ENCODE measurements at regions of chr17 and their contacts with region 1.

Region 1: DNA sequence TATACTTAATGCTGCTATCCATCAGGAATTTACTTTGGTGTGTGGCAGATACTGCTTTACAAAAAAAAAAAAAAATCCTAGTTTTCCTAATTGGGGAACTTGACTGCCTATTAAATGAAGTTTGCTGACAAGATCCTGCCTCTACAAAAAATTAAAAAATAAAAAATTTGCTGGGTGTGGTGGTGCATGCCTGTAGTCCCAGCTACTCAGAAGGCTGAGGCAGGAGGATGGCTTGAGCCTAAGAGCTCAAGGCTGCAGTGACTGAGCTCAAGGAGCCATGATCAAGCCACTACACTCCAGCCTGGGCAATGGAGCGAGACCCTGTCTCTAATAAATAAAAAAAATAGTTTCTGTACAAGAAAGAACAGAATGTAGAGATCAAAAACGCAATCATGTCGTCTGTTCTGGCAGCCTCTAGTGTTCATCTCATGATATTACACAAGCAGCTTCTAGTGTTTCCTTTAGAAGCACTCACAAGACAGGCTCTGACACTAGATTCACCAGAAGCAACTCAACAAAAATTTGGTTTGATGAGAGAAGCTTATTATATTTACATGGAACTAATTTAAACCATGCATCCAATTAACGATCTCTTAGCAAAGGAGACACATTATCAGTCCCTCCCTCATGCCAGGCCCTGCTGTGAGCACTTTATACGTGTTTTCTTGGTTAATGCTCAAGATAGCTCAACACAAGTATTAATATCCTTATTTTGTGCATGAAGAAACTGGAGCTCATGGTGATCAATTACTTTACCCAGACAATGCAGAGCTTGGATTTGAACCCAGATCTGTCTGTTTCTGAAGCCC is 6.8 kb upstream of the KRTAP17-1 start:
- DNase-seq: no peak
- ATAC-seq: peak; percentile 74
- H3K4me3 Mint-ChIP-seq: no peak overlapping the region
- H3K27ac Mint-ChIP-seq: no peak overlapping the region
- H3K4me1 Mint-ChIP-seq: peaks cover 15% of the 10 kb centered on the region
- H3K27me3 Mint-ChIP-seq: no peaks in the 10 kb centered on the region
- CTCF ChIP-seq: peak; percentile 82

Region 2: DNA sequence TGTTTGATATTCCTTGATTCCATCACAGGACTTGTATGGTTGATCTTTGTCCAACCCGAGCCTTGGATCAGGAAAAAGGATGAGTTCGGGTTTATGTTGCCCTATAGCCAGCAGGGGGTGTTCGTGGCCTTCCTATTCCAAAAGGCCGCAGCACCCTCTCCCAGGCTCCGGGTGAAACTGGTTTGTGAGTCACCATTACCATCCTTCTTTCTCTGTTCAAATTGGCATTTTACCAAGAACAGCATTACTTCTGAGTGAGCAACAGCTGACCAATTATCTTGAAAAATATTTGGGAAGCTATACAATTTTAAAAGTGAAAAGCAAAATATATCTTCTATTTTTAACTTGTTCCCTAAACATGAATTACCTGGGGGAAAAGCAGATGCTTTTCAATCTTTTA is 412.9 kb before region 1 on chr17:
- CTCF ChIA-PET with region 1: interaction called, 9 read pairs
- POLR2A ChIA-PET with region 1: no interaction called
- intact Hi-C with region 1: loop called (anchors 2 kb)
- DNase-seq: peak; percentile 82
- ATAC-seq: peak; percentile 94
- H3K4me3 Mint-ChIP-seq: no peak overlapping the region
- H3K27ac Mint-ChIP-seq: no peak overlapping the region
- H3K4me1 Mint-ChIP-seq: no peaks in the 10 kb centered on the region
- H3K27me3 Mint-ChIP-seq: peaks cover 23% of the 10 kb centered on the region
- CTCF ChIP-seq: peak; percentile 80

Region 3: DNA sequence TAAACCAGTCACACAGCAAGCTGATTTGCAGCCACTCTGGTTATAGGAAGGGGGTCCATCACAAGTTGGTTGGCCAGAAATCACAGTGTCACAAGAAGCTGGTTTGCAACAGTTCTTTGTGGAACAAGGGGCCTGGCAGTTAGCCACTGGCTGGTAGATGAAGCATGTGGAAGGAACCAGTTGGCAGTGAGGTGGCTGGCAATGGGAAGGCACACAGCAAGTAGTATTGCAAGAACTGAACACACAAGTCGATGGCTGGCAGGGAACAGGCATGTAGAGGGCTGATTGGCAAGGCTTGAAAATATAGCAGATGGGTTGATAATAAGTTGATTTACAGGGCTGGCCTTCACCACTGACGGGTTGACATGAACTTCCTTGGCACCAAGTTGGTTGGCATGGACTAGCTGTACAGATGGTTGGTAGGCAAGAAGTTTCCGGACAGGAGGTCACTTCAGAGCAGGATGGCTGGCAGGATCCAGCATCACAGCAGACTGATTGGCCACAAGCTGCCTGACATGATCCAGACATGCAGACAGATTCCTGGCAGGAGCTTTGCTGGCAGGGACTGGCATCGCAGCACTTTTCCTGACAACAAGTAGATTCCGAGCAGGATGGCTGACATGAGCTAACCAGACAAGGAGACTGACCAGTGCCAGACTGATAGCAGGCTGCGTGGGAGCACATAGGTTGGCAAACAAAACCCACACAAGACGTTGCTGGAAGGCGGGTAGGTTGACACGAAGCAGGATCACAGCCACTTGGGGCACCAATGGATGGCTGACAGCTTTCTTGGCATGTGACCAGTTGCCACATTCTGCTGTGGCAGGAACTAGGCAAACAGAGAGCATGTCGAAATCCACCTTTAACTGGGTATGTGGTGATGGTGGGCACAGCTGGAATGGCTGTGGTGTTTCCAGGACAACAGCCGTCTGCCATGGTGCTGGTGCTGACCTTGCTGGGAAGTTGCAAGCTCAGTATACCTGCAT is 20.1 kb before region 1 on chr17 and contains the start of gene KRTAP29-1:
- CTCF ChIA-PET with region 1: interaction called, 22 read pairs
- POLR2A ChIA-PET with region 1: interaction called, 3 read pairs
- intact Hi-C with region 1: no loop called
- DNase-seq: no peak
- ATAC-seq: no peak
- H3K4me3 Mint-ChIP-seq: no peak within 1 kb of the TSS
- H3K27ac Mint-ChIP-seq: no peak within 1 kb of the TSS
- H3K4me1 Mint-ChIP-seq: peaks cover 20% of the 10 kb centered on the region
- H3K27me3 Mint-ChIP-seq: no peaks in the 10 kb centered on the region
- CTCF ChIP-seq: no peak
- total RNA-seq, gene KRTAP29-1: not detected

Region 4: GRCh38 chr17:41308251-41308917 is 13.9 kb before region 1 on chr17:
- CTCF ChIA-PET with region 1: interaction called, 22 read pairs
- POLR2A ChIA-PET with region 1: interaction called, 3 read pairs
- intact Hi-C with region 1: no loop called
- DNase-seq: peak; percentile 73
- ATAC-seq: peak; percentile 79
- H3K4me3 Mint-ChIP-seq: peak overlapping the region; percentile 54
- H3K27ac Mint-ChIP-seq: peak overlapping the region; percentile 86
- H3K4me1 Mint-ChIP-seq: peaks cover 47% of the 10 kb centered on the region
- H3K27me3 Mint-ChIP-seq: no peaks in the 10 kb centered on the region
- CTCF ChIP-seq: no peak

Region 5: DNA sequence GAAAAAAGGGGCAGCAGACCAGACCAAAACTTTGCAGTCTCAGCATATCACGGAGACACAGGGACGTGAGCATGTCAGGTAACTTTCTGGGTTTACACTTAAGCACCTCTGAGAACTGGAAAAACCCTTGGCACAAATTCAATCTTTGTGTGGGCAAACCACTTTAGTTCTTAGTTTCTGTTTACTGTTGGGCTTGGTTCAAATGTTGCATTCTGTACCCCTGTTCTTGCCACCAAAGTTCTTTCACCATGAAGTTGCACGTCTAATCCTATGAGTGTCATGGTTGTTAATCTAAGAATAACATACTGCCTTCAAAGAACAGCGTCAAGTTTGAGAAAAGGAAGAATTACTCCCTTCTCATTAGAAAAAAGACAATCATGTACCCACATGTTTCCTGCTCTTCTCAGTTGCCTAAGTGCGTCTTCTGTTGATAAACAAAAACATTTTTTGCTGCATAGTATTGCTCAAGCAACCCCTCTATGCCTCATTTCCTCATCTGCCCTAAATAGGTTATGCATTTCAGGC is 16.7 kb after region 1 on chr17:
- CTCF ChIA-PET with region 1: interaction called, 13 read pairs
- POLR2A ChIA-PET with region 1: interaction called, 3 read pairs
- intact Hi-C with region 1: no loop called
- DNase-seq: peak; percentile 52
- ATAC-seq: peak; percentile 65
- H3K4me3 Mint-ChIP-seq: no peak overlapping the region
- H3K27ac Mint-ChIP-seq: peak overlapping the region; percentile 53
- H3K4me1 Mint-ChIP-seq: peaks cover 67% of the 10 kb centered on the region
- H3K27me3 Mint-ChIP-seq: no peaks in the 10 kb centered on the region
- CTCF ChIP-seq: no peak